Breast epithelium (tissue), 4 donors: ENCODE measurements at regions of chr7 and their contacts with region 1.

Region 1: GRCh38 chr7:132614428-132615318 is 38.4 kb upstream of the PLXNA4 start:
- DNase-seq: no peak
- H3K4me3 ChIP-seq: peak overlapping the region; percentile 16 to 54 (median 31)
- H3K27ac ChIP-seq: no peak overlapping the region
- H3K4me1 ChIP-seq: no peaks in the 10 kb centered on the region
- H3K27me3 ChIP-seq: no peaks in the 10 kb centered on the region
- CTCF ChIP-seq: no peak
- POLR2A ChIP-seq: no peak

Region 2: GRCh38 chr7:132569884-132570614 is 44.6 kb before region 1 on chr7:
- intact Hi-C with region 1: no loop called
- DNase-seq: no peak
- H3K4me3 ChIP-seq: no peak overlapping the region
- H3K27ac ChIP-seq: no peak overlapping the region
- H3K4me1 ChIP-seq: no peaks in the 10 kb centered on the region
- H3K27me3 ChIP-seq: peaks cover 0 to 40% of the 10 kb centered on the region in 2 donors
- CTCF ChIP-seq: no peak
- POLR2A ChIP-seq: no peak

Region 3: GRCh38 chr7:133815611-133816210 is 1201.0 kb after region 1 on chr7:
- intact Hi-C with region 1: loop called (anchors 5 kb)
- DNase-seq: no peak
- H3K4me3 ChIP-seq: no peak overlapping the region
- H3K27ac ChIP-seq: no peak overlapping the region
- H3K4me1 ChIP-seq: no peaks in the 10 kb centered on the region
- H3K27me3 ChIP-seq: no peaks in the 10 kb centered on the region
- CTCF ChIP-seq: no peak
- POLR2A ChIP-seq: no peak